Posterior cingulate gyrus (tissue), 11 donors: ENCODE measurements at regions of chr15 and their contacts with region 1.

Region 1: DNA sequence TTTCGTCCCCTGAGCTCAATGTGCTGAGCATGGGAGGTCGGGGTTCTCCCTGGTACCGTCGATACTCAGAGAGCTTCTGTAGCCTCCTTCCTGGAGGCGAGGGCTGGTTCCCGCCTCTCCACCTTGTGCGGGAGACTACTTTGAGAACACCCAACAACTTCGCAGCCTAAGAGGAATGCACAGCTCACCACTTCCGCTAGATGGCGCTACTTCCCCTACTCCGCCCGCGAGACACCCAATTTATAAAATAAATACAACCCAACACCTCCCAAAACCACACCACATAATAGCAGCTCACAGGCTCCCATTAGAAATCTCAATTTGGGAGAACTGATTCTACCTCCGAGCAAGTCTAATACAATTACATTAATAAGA is 1.2 kb downstream of the RGMA start:
- DNase-seq: peak in 9 of 10 donors; percentile 64 to 94 (median 73)

Region 2: DNA sequence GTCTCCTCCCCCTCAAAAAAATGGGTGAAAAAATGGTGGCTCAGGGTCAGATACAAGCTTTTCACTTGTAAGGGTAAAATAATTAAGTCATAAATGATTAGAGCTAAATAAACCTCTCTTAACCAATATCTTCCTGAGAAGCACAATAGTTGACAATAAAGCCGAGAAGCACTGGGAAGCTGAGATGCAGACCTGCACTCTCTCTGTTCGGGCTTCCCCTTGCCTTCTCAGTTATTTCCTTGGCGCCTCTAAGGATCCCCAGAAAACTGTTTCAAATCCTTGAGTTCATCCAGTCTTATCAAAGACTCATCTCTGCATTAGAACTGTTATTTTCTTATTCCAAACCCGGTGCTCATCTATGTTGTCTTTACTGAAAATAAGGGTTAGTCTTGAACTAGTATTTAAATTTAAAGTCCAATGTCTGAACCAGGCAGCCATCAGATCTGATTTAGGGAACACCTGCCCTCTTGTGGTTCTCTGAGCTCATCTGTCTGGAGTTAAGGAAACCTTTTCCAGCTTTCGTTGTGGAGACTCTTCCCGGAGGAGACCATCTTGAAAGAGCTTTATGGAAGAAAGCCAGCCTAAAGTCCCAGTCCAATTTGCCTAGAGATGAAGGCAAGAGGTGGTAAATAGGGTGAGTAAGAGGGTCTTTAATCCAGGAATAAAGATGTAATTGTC is 887.1 kb after region 1 on chr15:
- intact Hi-C with region 1: loop called (anchors 10 kb)
- DNase-seq: no peak

Region 3: DNA sequence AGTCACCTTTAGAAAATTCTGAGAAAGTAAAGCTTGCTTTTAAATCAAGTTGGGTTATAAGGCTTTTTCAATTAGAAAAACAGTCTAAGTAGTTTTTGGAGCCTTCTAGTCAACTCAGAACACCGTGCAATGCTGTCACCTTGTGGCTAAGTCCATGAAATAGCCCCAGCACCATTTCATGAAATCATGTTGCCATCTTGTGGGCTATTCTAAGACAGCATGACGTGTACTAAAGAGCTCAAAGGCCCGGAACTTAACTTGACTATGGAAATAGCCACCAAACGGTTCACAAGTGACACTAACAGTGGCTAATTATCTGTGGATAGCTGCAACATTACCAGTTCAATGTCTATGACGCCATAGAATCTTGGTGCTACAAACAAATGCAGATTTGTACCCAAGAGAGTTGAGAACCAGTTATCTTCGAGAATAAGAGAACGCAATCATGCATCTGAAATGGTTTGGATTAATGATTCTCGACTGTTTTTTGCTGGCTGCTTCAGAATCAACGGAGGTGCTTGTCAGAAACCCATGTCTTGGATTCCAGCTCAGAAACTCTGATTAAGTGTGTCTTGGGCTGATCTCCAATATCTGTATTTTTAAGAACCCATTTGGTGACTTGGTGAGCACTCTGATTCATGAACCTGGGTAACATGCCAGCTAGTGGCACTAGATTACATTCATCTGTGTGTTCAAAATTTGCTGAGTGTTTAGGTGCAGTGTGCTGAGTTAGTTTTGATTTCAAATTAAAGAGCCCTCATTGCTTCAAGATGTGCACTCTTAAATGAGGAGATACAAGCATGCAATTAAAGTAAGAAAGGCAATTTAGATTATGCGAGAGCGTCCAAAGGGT is 1032.3 kb after region 1 on chr15:
- intact Hi-C with region 1: loop called (anchors 2 kb)
- DNase-seq: peak in 7 of 10 donors; percentile 29 to 91 (median 59)